Activated T-helper 2 cell treated with anti-CD3 and anti-CD28 coated beads, Interferon-gamma antibody, Interleukin-2, Interleukin-4, amounts not matched to agents 10 μg/mL and 5 μg/mL and 100 μg/mL, durations not matched to agents 14 hours and 24 hours and 36 hours (primary cell): ENCODE measurements at regions of chr5 and their contacts with region 1.

Region 1: GRCh38 chr5:172223901-172224873 is 30.2 kb downstream of the EFCAB9 start:
- DNase-seq: peak; percentile 11
- H3K4me3 Mint-ChIP-seq: no peak overlapping the region
- H3K27ac Mint-ChIP-seq: peak overlapping the region; percentile 71
- H3K4me1 Mint-ChIP-seq: peaks cover 31% of the 10 kb centered on the region
- H3K27me3 Mint-ChIP-seq: peaks cover 24% of the 10 kb centered on the region

Region 2: DNA sequence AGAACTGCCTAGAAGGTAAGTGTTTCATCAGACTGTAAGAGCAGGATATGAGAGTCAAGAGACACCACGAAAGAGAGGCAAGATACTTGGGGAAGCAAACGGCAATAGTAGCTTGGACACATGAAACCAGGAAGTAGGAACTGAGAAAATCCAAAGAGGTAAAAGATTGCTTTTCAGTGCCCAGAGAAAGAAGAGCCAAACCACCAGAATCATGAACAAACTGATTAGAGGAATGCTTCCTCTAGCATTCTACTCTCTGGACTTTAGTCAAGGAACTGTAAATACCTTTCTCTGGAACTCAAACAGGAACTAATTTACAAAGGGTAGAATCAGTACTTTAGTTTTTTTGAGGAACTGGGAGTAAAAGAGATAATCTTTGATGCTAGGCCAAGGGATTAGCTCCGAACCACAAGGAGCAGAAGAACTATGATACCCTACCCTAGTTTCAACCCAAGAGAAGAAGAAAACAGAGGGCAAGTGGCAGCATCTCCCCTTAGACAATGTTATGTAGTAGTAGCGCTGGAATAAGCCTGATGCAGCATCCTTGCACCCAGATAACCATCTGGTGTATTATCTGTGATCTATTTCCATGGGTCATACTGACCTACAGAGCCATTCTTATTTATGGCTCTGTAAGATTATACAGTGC is 11.1 kb after region 1 on chr5:
- intact Hi-C with region 1: loop called (anchors 2 kb)
- DNase-seq: no peak
- H3K4me3 Mint-ChIP-seq: no peak overlapping the region
- H3K27ac Mint-ChIP-seq: no peak overlapping the region
- H3K4me1 Mint-ChIP-seq: peaks cover 43% of the 10 kb centered on the region
- H3K27me3 Mint-ChIP-seq: peaks cover 6% of the 10 kb centered on the region